H1 (cell line): ENCODE measurements at regions of chr10 and their contacts with region 1.

Region 1: DNA sequence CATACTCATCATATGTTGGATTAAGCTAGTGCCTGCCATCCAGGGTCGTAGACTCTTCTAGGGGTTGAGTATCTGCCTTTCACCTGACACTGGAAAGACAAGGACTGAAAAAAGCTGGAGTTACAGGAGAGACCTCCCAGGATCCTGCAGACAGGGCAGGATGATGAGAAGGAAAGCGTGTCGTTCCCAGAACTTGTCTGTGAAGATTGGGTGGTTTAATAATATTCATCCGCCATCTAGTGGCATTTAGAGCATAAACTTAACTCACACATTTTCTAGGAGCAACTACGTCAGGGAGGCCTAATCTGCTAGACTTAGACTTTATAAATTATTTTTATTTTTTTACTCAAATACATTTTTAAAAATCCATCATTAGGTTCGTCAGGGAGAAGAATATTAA is 59.6 kb downstream of the ADRB1 start:
- DNase-seq: no peak
- H3K4me3 ChIP-seq: no peak overlapping the region
- H3K27ac ChIP-seq: no peak overlapping the region
- H3K4me1 ChIP-seq: peaks cover 0 to 3% (median 0%) of the 10 kb centered on the region in 4 experiments; a peak in 3 of 7 replicates
- H3K27me3 ChIP-seq: peaks cover 3 to 22% (median 21%) of the 10 kb centered on the region in 4 experiments
- CTCF ChIP-seq: peak in 2 of 3 experiments; percentile 38 to 48; a peak in 2 of 4 replicates
- EP300 ChIP-seq: no peak
- POLR2A ChIP-seq: no peak
- RAD21 ChIP-seq: peak; percentile 71 to 72

Region 2: GRCh38 chr10:113978802-113979201 is 124.5 kb before region 1 on chr10:
- CTCF ChIA-PET with region 1: no interaction called
- POLR2A ChIA-PET with region 1: no interaction called
- DNase-seq: no peak
- H3K4me3 ChIP-seq: no peak overlapping the region
- H3K27ac ChIP-seq: no peak overlapping the region
- H3K4me1 ChIP-seq: peaks cover 0 to 7% (median 3%) of the 10 kb centered on the region in 4 experiments; a peak in 3 of 7 replicates
- H3K27me3 ChIP-seq: no peaks in the 10 kb centered on the region; a peak in 1 of 7 replicates
- CTCF ChIP-seq: no peak
- EP300 ChIP-seq: no peak
- POLR2A ChIP-seq: no peak
- RAD21 ChIP-seq: no peak

Region 3: DNA sequence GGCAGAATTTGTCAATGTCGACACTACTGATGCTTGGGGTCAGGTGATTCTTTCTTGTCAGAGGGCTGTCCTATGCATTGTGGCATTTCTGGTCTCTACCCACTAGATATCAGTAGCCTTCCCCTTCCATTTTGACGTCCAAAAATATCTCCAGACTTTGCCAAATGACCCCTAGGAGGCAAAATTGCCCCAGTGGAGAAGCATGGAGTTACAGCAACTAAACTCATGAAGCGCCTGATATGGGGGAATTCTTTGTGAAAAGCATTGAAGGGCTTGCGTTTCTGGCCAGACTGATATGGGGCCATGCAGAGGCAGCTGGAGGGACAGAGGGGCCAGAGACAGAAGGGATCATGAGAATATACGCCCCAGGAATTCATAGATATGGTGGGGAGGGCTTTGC is 16.0 kb before region 1 on chr10:
- CTCF ChIA-PET with region 1: interaction called, 33 read pairs
- POLR2A ChIA-PET with region 1: no interaction called
- DNase-seq: no peak
- H3K4me3 ChIP-seq: no peak overlapping the region
- H3K27ac ChIP-seq: no peak overlapping the region
- H3K4me1 ChIP-seq: no peaks in the 10 kb centered on the region
- H3K27me3 ChIP-seq: no peaks in the 10 kb centered on the region
- CTCF ChIP-seq: peak in 2 of 3 experiments; percentile 29 to 75; a peak in 3 of 4 replicates
- EP300 ChIP-seq: no peak
- POLR2A ChIP-seq: no peak
- RAD21 ChIP-seq: no peak; a peak in 1 of 4 replicates